Activated CD4-positive, alpha-beta memory T cell treated with anti-CD3 and anti-CD28 coated beads for 36 hours (primary cell): ENCODE measurements at regions of chr1 and their contacts with region 1.

Region 1: GRCh38 chr1:231315887-231316286 is 21.8 kb downstream of the EXOC8 start:
- DNase-seq: peak; percentile 64
- H3K4me3 Mint-ChIP-seq: no peak overlapping the region
- H3K27ac Mint-ChIP-seq: no peak overlapping the region
- H3K4me1 Mint-ChIP-seq: no peaks in the 10 kb centered on the region
- H3K27me3 Mint-ChIP-seq: no peaks in the 10 kb centered on the region

Region 2: GRCh38 chr1:231603598-231604275 is 287.9 kb after region 1 on chr1:
- CTCF ChIA-PET with region 1: interaction called, 6 read pairs
- POLR2A ChIA-PET with region 1: no interaction called
- intact Hi-C with region 1: loop called (anchors 1 kb)
- DNase-seq: peak; percentile 42
- H3K4me3 Mint-ChIP-seq: peak overlapping the region; percentile 84
- H3K27ac Mint-ChIP-seq: peak overlapping the region; percentile 66
- H3K4me1 Mint-ChIP-seq: peaks cover 5% of the 10 kb centered on the region
- H3K27me3 Mint-ChIP-seq: no peaks in the 10 kb centered on the region